ENCODE measurements at regions of chr6 and their contacts with region 1.

Region 1: DNA sequence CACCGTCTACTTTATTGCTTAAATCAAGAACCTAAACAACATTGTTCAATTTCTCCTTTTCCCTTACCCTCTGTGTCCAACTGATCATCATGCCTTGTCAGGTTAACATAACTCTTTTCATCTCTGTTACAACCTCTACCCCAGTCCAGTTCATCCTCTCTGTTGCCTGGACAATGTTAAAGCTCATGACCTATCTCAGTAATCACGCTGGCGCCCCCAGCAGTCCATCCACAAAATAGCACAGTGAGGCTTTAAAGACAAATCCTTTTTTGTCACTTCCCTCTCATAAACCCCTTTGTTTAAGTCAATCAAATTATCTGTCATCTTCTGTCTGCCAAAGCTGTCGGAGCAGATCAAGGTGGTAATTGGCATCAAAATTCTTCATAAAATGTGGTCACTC is 140.1 kb downstream of the QKI start:
- DNase-seq: peak; percentile 66
- ATAC-seq: peak; percentile 47
- H3K4me3 Mint-ChIP-seq: no peak overlapping the region
- H3K27ac Mint-ChIP-seq: no peak overlapping the region
- H3K4me1 Mint-ChIP-seq: peaks cover 2% of the 10 kb centered on the region
- H3K27me3 Mint-ChIP-seq: no peaks in the 10 kb centered on the region

Region 2: DNA sequence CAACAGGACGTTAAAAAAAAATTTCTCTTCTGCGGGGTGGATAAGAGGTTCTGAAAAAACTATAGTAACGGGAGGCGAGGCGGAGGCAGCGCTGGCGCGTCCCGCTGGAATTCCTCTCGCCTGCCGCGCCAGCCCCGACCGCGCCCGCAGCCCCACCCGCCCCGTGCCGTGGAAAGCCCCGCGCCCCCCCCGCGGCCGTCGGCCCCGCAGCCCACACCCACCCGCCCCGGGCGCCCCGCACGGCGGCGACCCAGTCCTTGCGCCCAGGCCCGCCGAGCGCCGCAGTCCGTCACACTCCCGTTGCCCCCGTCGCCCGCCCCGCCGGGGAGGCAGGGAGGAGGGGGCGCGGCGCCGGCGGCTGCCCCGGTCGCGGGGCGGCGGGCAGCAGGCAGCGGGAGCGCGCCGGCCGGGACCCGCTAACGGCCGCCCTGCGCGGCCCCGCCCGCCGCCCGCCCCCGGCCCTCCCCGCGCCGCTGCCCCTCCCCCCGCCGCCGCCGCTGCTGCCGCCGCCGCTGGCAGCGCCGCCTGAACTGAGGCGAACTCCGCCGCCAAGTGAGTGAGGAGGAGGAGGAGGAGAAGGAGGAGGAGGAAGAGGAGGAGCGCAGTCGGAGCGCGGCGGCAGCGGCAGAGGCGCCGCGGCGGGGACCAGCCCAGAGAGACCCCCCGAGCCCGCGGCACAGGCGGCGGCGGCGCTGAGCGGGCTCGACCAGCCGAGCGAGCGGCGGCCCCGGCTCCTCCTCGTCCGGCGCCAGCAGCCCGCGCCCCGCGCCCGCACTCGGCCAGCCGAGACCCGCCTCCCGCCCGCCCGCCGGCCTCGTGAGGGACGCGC is 140.3 kb before region 1 on chr6 and contains the start of gene QKI:
- CTCF ChIA-PET with region 1: interaction called, 15 read pairs
- POLR2A ChIA-PET with region 1: interaction called, 3 read pairs
- DNase-seq: peak; percentile 83
- ATAC-seq: peak; percentile 65
- H3K4me3 Mint-ChIP-seq: peak within 1 kb of the TSS; percentile 75
- H3K27ac Mint-ChIP-seq: peak within 1 kb of the TSS; percentile 88
- H3K4me1 Mint-ChIP-seq: peaks cover 32% of the 10 kb centered on the region
- H3K27me3 Mint-ChIP-seq: peaks cover 11% of the 10 kb centered on the region
- total RNA-seq, gene QKI: 55.3 to 58.6 TPM

Region 3: GRCh38 chr6:163427498-163428254 is 127.0 kb before region 1 on chr6:
- CTCF ChIA-PET with region 1: interaction called, 10 read pairs
- POLR2A ChIA-PET with region 1: no interaction called
- DNase-seq: no peak
- ATAC-seq: no peak
- H3K4me3 Mint-ChIP-seq: no peak overlapping the region
- H3K27ac Mint-ChIP-seq: no peak overlapping the region
- H3K4me1 Mint-ChIP-seq: peaks cover 5% of the 10 kb centered on the region
- H3K27me3 Mint-ChIP-seq: no peaks in the 10 kb centered on the region

Region 4: GRCh38 chr6:163543321-163543720 is 11.3 kb before region 1 on chr6:
- CTCF ChIA-PET with region 1: no interaction called
- POLR2A ChIA-PET with region 1: no interaction called
- DNase-seq: no peak
- ATAC-seq: no peak
- H3K4me3 Mint-ChIP-seq: no peak overlapping the region
- H3K27ac Mint-ChIP-seq: no peak overlapping the region
- H3K4me1 Mint-ChIP-seq: no peaks in the 10 kb centered on the region
- H3K27me3 Mint-ChIP-seq: no peaks in the 10 kb centered on the region